CD4-positive, alpha-beta T cell (primary cell): ENCODE measurements at regions of chr1 and their contacts with region 1.

Region 1: GRCh38 chr1:113811888-113812660 is at the start of gene RSBN1:
- DNase-seq: peak; percentile 96 to 100 (median 97)
- ATAC-seq: peak; percentile 91
- H3K4me3 ChIP-seq: peak within 1 kb of the TSS; percentile 89
- H3K4me3 Mint-ChIP-seq: peak within 1 kb of the TSS; percentile 97
- H3K27ac ChIP-seq: peak within 1 kb of the TSS; percentile 89 to 96
- H3K27ac Mint-ChIP-seq: peak within 1 kb of the TSS; percentile 96
- H3K4me1 ChIP-seq: peaks cover 15% of the 10 kb centered on the region
- H3K4me1 Mint-ChIP-seq: peaks cover 47% of the 10 kb centered on the region
- H3K27me3 ChIP-seq: no peaks in the 10 kb centered on the region
- H3K27me3 Mint-ChIP-seq: no peaks in the 10 kb centered on the region
- CTCF ChIP-seq: peak; percentile 15
- total RNA-seq, gene RSBN1: 44.2 to 44.6 TPM

Region 2: GRCh38 chr1:112715264-112716053 is 1096.6 kb before region 1 on chr1 and contains the start of gene PPM1J:
- CTCF ChIA-PET with region 1: interaction called, 3 read pairs
- POLR2A ChIA-PET with region 1: interaction called, 3 read pairs
- intact Hi-C with region 1: loop called in 1 of 2 experiments (anchors 10 kb)
- DNase-seq: peak; percentile 91 to 99 (median 96)
- ATAC-seq: peak; percentile 84
- H3K4me3 ChIP-seq: peak within 1 kb of the TSS; percentile 69
- H3K4me3 Mint-ChIP-seq: peak within 1 kb of the TSS; percentile 89
- H3K27ac ChIP-seq: peak within 1 kb of the TSS in 1 of 2 donors; percentile 39
- H3K27ac Mint-ChIP-seq: peak within 1 kb of the TSS; percentile 81
- H3K4me1 ChIP-seq: peaks cover 37% of the 10 kb centered on the region
- H3K4me1 Mint-ChIP-seq: peaks cover 24% of the 10 kb centered on the region
- H3K27me3 ChIP-seq: peaks cover 15 to 22% of the 10 kb centered on the region in 2 experiments
- H3K27me3 Mint-ChIP-seq: peaks cover 35% of the 10 kb centered on the region
- CTCF ChIP-seq: no peak
- total RNA-seq, gene PPM1J: 0.39 to 0.49 TPM

Region 3: GRCh38 chr1:113036639-113037321 is 775.3 kb before region 1 on chr1:
- CTCF ChIA-PET with region 1: no interaction called
- POLR2A ChIA-PET with region 1: no interaction called
- intact Hi-C with region 1: no loop called
- DNase-seq: no peak
- ATAC-seq: no peak
- H3K4me3 ChIP-seq: no peak overlapping the region
- H3K4me3 Mint-ChIP-seq: no peak overlapping the region
- H3K27ac ChIP-seq: no peak overlapping the region
- H3K27ac Mint-ChIP-seq: no peak overlapping the region
- H3K4me1 ChIP-seq: no peaks in the 10 kb centered on the region
- H3K4me1 Mint-ChIP-seq: no peaks in the 10 kb centered on the region
- H3K27me3 ChIP-seq: no peaks in the 10 kb centered on the region
- H3K27me3 Mint-ChIP-seq: no peaks in the 10 kb centered on the region
- CTCF ChIP-seq: no peak

Region 4: DNA sequence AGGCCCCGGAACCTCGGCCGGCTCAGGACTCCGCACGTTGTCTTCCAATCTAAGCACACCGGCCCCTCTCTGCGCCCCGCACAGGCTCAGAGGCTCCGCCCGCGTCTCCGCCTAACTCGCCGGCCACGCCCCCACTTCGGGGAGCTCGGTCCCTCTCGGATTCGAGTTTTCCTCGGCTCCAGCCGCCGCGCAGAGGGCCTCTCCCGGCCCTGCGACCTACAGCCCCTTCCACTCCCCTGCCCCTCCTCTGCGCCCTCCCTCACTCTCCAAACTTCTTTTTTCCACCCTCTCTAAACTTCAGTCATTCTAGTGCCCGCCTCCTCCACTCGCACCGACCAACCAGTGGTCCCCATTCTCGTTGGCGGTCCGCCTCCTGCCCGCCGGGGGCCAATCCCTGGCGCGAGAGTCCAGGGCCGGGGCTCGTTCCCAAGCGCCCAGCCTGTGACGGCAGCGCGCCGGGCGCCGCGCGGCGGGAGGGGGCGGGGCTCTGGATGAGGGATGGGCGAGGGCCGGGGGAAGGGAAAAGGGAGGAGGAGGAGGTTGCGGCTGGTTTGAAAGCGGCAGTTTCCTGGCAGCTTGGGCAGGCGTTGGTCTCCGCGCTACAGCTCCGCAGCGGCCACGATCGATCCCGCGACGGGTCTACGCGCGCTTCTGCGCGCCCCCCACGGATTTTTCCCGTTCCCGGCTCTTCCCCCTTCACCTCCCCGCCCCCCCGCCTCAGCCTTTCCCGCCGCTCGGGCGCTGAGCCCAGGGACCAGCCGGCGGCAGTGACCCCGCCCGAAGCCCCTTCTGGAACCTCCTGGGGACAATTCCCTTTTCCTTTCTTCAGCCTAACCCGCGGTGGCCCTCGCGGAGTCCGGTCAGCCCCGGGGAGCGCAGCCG is 421.9 kb before region 1 on chr1 and contains the start of gene MAGI3:
- CTCF ChIA-PET with region 1: no interaction called
- POLR2A ChIA-PET with region 1: no interaction called
- intact Hi-C with region 1: loop called in 1 of 2 experiments (anchors 10 kb)
- DNase-seq: peak; percentile 83 to 97 (median 92)
- ATAC-seq: peak; percentile 87
- H3K4me3 ChIP-seq: peak within 1 kb of the TSS; percentile 91
- H3K4me3 Mint-ChIP-seq: peak within 1 kb of the TSS; percentile 92
- H3K27ac ChIP-seq: peak within 1 kb of the TSS; percentile 43 to 46
- H3K27ac Mint-ChIP-seq: peak within 1 kb of the TSS; percentile 67
- H3K4me1 ChIP-seq: peaks cover 25% of the 10 kb centered on the region
- H3K4me1 Mint-ChIP-seq: peaks cover 28% of the 10 kb centered on the region
- H3K27me3 ChIP-seq: no peaks in the 10 kb centered on the region
- H3K27me3 Mint-ChIP-seq: no peaks in the 10 kb centered on the region
- CTCF ChIP-seq: no peak
- total RNA-seq, gene MAGI3: 6.7 to 8.7 TPM

Region 5: GRCh38 chr1:113792986-113793385 is 19.1 kb before region 1 on chr1:
- CTCF ChIA-PET with region 1: interaction called, 5 read pairs
- POLR2A ChIA-PET with region 1: interaction called, 11 read pairs
- intact Hi-C with region 1: no loop called
- DNase-seq: no peak
- ATAC-seq: no peak
- H3K4me3 ChIP-seq: no peak overlapping the region
- H3K4me3 Mint-ChIP-seq: no peak overlapping the region
- H3K27ac ChIP-seq: peak overlapping the region in 1 of 2 donors; percentile 61
- H3K27ac Mint-ChIP-seq: peak overlapping the region; percentile 70
- H3K4me1 ChIP-seq: peaks cover 20% of the 10 kb centered on the region
- H3K4me1 Mint-ChIP-seq: peaks cover 92% of the 10 kb centered on the region
- H3K27me3 ChIP-seq: no peaks in the 10 kb centered on the region
- H3K27me3 Mint-ChIP-seq: no peaks in the 10 kb centered on the region
- CTCF ChIP-seq: no peak

Region 6: GRCh38 chr1:113928941-113929749 is 117.1 kb after region 1 on chr1 and contains the start of gene HIPK1:
- CTCF ChIA-PET with region 1: interaction called, 6 read pairs
- POLR2A ChIA-PET with region 1: interaction called, 62 read pairs
- intact Hi-C with region 1: loop called (anchors 1 to 5 kb)
- DNase-seq: peak; percentile 84 to 95 (median 92)
- ATAC-seq: peak; percentile 66
- H3K4me3 ChIP-seq: peak within 1 kb of the TSS; percentile 96
- H3K4me3 Mint-ChIP-seq: peak within 1 kb of the TSS; percentile 98
- H3K27ac ChIP-seq: peak within 1 kb of the TSS; percentile 98
- H3K27ac Mint-ChIP-seq: peak within 1 kb of the TSS; percentile 100
- H3K4me1 ChIP-seq: peaks cover 33% of the 10 kb centered on the region
- H3K4me1 Mint-ChIP-seq: peaks cover 57% of the 10 kb centered on the region
- H3K27me3 ChIP-seq: no peaks in the 10 kb centered on the region
- H3K27me3 Mint-ChIP-seq: no peaks in the 10 kb centered on the region
- CTCF ChIP-seq: no peak
- total RNA-seq, gene HIPK1: 245 to 251 TPM

Region 7: DNA sequence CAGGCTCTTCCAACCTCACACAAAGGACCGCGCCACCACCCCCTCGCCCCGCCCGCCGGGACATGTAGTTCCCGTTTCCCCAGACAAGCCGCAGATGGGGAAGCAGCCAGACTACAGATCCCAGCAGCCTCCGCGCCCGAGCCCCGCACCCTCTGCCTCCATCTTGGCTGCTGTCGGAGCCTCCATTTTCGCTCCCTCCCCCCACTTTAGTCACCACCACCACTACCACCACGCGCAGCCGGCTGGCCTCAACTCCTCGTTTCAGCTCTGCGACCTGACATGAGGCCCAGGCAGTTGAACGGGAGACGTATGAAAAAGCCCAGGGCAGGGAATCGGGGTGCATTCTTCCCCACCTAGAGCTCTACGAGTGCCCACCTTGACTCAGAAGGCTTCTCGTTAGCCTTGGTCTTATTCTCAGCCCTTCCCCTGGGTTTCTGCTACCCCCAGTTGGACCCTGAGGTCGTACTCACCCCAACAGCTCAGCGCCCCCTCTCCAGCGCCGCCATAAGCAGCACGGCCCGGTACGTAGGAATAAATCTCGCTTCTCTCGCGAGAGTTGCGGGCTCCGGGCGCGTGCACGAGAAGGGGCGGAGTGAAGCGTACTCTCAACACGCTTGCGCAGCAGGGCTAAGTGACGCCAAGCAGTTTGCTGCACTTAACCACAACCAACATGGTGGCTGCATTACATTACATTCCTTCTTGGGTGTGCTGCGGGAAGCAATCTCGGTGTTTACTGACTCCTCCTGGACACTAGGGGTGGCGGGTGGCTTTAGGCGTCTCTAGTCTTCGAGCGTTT is 945.6 kb after region 1 on chr1 and contains the start of gene CSDE1:
- CTCF ChIA-PET with region 1: no interaction called
- POLR2A ChIA-PET with region 1: interaction called, 3 read pairs
- intact Hi-C with region 1: loop called in 1 of 2 experiments (anchors 10 kb)
- DNase-seq: peak; percentile 94 to 99 (median 96)
- ATAC-seq: peak; percentile 81
- H3K4me3 ChIP-seq: peak within 1 kb of the TSS; percentile 84
- H3K4me3 Mint-ChIP-seq: peak within 1 kb of the TSS; percentile 99
- H3K27ac ChIP-seq: peak within 1 kb of the TSS; percentile 99 to 100
- H3K27ac Mint-ChIP-seq: peak within 1 kb of the TSS; percentile 98
- H3K4me1 ChIP-seq: peaks cover 26% of the 10 kb centered on the region
- H3K4me1 Mint-ChIP-seq: peaks cover 58% of the 10 kb centered on the region
- H3K27me3 ChIP-seq: no peaks in the 10 kb centered on the region
- H3K27me3 Mint-ChIP-seq: no peaks in the 10 kb centered on the region
- CTCF ChIP-seq: no peak
- total RNA-seq, gene CSDE1: 725 to 731 TPM

Region 8: GRCh38 chr1:115506926-115507589 is 1695.0 kb after region 1 on chr1:
- CTCF ChIA-PET with region 1: no interaction called
- POLR2A ChIA-PET with region 1: no interaction called
- intact Hi-C with region 1: no loop called
- DNase-seq: no peak
- ATAC-seq: no peak
- H3K4me3 ChIP-seq: no peak overlapping the region
- H3K4me3 Mint-ChIP-seq: no peak overlapping the region
- H3K27ac ChIP-seq: no peak overlapping the region
- H3K27ac Mint-ChIP-seq: no peak overlapping the region
- H3K4me1 ChIP-seq: no peaks in the 10 kb centered on the region
- H3K4me1 Mint-ChIP-seq: no peaks in the 10 kb centered on the region
- H3K27me3 ChIP-seq: peaks cover 12 to 15% of the 10 kb centered on the region in 2 experiments
- H3K27me3 Mint-ChIP-seq: peaks cover 11% of the 10 kb centered on the region
- CTCF ChIP-seq: no peak